PC-9 (cell line): ENCODE measurements at regions of chr17 and their contacts with region 1.

Region 1: GRCh38 chr17:75839801-75840568 is 4.2 kb downstream of the UNC13D start:
- DNase-seq: no peak
- H3K4me3 ChIP-seq: no peak overlapping the region
- H3K27ac ChIP-seq: no peak overlapping the region
- H3K4me1 ChIP-seq: peaks cover 18% of the 10 kb centered on the region
- H3K27me3 ChIP-seq: no peaks in the 10 kb centered on the region
- CTCF ChIP-seq: no peak

Region 2: GRCh38 chr17:75345514-75346167 is 494.3 kb before region 1 on chr17:
- CTCF ChIA-PET with region 1: interaction called, 15 read pairs
- POLR2A ChIA-PET with region 1: no interaction called
- intact Hi-C with region 1: no loop called
- DNase-seq: no peak
- H3K4me3 ChIP-seq: no peak overlapping the region
- H3K27ac ChIP-seq: no peak overlapping the region
- H3K4me1 ChIP-seq: no peaks in the 10 kb centered on the region
- H3K27me3 ChIP-seq: no peaks in the 10 kb centered on the region
- CTCF ChIP-seq: no peak